B cell (primary cell): ENCODE measurements at regions of chr1 and their contacts with region 1.

Region 1: DNA sequence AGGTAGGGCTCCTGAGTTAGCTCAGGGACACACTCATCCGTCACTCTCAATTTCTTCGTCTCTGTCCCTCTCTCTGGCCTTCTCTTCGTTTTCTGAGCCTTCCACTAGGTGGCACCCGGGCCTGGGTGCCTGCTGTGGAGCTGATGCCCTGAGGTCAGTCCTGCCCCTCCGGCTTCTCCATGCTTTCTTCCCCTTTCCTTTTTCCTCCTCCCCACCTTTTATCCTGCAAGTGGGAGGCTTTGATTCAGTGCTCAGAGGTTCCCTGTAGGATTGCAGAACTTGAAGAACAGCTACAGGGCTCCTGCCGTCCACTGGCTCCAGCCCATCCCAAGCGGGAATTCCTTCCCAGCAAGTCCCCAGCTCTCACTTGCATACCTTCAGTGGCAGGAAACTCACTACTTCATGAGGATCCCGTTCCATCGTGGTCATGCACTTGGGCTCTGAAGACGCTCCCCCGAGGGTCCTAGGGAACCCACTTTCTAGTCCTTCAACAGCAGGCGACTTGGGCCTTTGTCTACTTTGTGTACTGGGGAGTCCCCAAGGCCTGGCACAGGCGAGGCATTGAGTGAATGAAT is 45.6 kb downstream of the SRRM1 start:
- DNase-seq: peak; percentile 79
- ATAC-seq: peak; percentile 87
- H3K4me3 ChIP-seq: no peak overlapping the region
- H3K4me3 Mint-ChIP-seq: no peak overlapping the region
- H3K27ac ChIP-seq: no peak overlapping the region
- H3K27ac Mint-ChIP-seq: peak overlapping the region; percentile 0
- H3K4me1 ChIP-seq: peaks cover 1 to 9% of the 10 kb centered on the region in 2 donors
- H3K4me1 Mint-ChIP-seq: peaks cover 8% of the 10 kb centered on the region
- H3K27me3 ChIP-seq: no peaks in the 10 kb centered on the region
- H3K27me3 Mint-ChIP-seq: no peaks in the 10 kb centered on the region
- CTCF ChIP-seq: peak; percentile 87

Region 2: GRCh38 chr1:24594154-24594553 is 94.6 kb before region 1 on chr1:
- CTCF ChIA-PET with region 1: no interaction called
- POLR2A ChIA-PET with region 1: no interaction called
- intact Hi-C with region 1: no loop called
- DNase-seq: no peak
- ATAC-seq: no peak
- H3K4me3 ChIP-seq: no peak overlapping the region
- H3K4me3 Mint-ChIP-seq: no peak overlapping the region
- H3K27ac ChIP-seq: no peak overlapping the region
- H3K27ac Mint-ChIP-seq: no peak overlapping the region
- H3K4me1 ChIP-seq: no peaks in the 10 kb centered on the region
- H3K4me1 Mint-ChIP-seq: no peaks in the 10 kb centered on the region
- H3K27me3 ChIP-seq: peaks cover 0 to 7% (median 0%) of the 10 kb centered on the region in 4 experiments
- H3K27me3 Mint-ChIP-seq: peaks cover 17% of the 10 kb centered on the region
- CTCF ChIP-seq: no peak

Region 3: DNA sequence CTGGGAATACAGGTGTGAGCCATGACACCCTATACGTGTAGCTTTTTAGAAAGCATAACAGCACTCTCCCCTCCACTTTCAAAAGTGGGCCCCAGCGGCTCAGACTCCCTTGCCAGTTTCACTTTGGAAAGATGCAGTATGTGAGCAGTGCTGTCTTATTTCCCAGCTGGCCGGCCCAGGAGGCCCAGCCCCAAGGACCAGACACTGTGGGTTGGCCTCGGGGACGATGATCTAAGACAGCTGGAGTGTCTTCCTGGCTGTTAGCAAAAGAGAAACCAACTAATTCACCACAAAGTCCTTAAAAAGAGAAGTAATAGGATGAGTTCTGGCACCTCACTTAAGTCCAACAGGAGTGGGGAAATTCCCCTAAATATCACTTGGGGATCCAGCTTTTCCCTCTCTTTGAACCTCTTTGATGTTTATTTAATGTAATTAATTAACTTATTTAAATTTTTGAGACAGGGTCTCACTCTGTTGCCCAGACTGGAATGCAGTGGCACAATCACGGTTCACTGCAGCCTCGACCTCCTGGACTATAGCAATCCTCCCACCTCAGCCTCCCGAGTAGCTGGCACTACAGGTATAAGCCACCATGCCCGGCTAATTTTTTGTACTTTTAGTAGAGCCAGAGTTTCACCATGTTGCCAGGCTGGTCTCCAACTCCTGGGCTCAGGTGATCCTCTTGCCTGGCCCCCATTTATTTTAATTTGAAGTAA is 39.0 kb after region 1 on chr1:
- CTCF ChIA-PET with region 1: interaction called, 22 read pairs
- POLR2A ChIA-PET with region 1: no interaction called
- intact Hi-C with region 1: no loop called
- DNase-seq: peak; percentile 65
- ATAC-seq: peak; percentile 82
- H3K4me3 ChIP-seq: peak overlapping the region in 3 of 5 experiments; percentile 27 to 58 (median 38)
- H3K4me3 Mint-ChIP-seq: peak overlapping the region; percentile 74
- H3K27ac ChIP-seq: peak overlapping the region; percentile 25 to 59
- H3K27ac Mint-ChIP-seq: peak overlapping the region; percentile 71
- H3K4me1 ChIP-seq: peaks cover 19 to 31% of the 10 kb centered on the region in 2 donors
- H3K4me1 Mint-ChIP-seq: peaks cover 27% of the 10 kb centered on the region
- H3K27me3 ChIP-seq: no peaks in the 10 kb centered on the region
- H3K27me3 Mint-ChIP-seq: no peaks in the 10 kb centered on the region
- CTCF ChIP-seq: no peak

Region 4: DNA sequence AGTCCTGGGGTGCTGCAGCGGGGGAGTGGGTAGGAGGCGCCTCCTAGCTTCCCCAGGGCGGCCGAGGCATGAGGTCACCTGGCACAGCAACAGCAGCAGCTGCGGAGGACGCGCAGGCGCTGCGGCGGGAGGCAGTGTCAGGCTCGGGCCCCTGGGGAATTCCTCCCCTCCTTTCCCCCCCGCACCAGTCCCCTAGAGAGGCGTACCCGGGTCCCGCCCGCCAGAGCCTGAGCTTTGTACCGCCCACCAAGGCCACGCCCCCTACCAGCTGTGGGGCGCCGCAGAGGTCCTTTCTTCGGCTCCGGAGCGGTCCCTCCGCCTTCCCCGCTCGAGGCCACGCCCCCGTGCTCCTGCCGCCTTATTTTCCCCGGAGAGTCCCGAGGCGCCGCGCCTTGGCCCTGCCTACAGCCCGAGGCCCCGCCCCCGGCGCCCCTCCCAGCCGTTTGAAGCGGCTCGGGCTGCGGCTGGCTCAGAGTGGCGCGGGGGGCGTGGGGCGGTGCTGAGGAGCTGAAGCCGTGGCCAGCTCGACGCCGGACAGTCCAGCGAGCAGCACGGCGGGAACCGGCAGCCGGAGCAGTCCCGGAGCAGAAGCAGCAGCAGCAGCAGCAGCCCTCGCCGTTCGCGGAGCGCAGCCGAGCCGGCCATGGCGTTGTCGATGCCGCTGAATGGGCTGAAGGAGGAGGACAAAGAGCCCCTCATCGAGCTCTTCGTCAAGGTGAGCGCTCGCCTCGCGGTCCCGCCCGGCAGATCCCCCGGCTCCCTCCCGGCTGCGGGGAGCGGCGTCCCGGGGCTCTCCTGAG is 56.4 kb after region 1 on chr1 and contains the start of gene CLIC4:
- CTCF ChIA-PET with region 1: interaction called, 49 read pairs
- POLR2A ChIA-PET with region 1: interaction called, 4 read pairs
- intact Hi-C with region 1: loop called (anchors 2 kb)
- DNase-seq: peak; percentile 100
- ATAC-seq: peak; percentile 78
- H3K4me3 ChIP-seq: peak within 1 kb of the TSS; percentile 79 to 99 (median 91)
- H3K4me3 Mint-ChIP-seq: peak within 1 kb of the TSS; percentile 94
- H3K27ac ChIP-seq: peak within 1 kb of the TSS; percentile 72 to 88
- H3K27ac Mint-ChIP-seq: peak within 1 kb of the TSS; percentile 99
- H3K4me1 ChIP-seq: peaks cover 63 to 82% of the 10 kb centered on the region in 2 donors
- H3K4me1 Mint-ChIP-seq: peaks cover 67% of the 10 kb centered on the region
- H3K27me3 ChIP-seq: no peaks in the 10 kb centered on the region
- H3K27me3 Mint-ChIP-seq: no peaks in the 10 kb centered on the region
- CTCF ChIP-seq: no peak
- total RNA-seq, gene CLIC4: 123 and 127 TPM in 2 replicates

Region 5: DNA sequence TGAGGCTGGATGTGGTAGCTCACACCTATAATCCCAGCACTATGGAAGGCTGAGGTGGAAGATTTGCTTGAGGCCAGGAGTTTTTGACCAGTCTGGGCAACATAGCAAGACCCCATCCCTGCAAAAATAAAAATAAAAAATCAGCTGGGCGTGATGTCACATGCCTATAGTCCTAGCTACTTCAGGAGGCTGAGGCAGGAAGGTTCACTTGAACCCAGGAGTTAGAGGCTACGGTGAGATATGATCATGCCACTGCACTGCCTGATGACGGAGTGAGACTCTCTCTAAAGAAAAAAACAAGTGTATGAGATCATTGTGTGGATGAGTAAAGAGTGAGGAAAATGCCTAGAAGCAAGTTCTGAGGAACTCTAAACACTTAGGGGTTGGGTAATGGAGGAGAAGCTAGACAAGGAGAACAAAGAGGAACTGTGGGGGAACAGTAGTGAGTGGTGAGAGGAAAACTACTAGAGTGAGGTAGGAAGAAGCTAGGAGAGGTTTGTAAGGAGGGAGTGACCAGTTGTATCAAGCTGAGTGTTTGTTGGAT is 73.5 kb after region 1 on chr1:
- CTCF ChIA-PET with region 1: interaction called, 15 read pairs
- POLR2A ChIA-PET with region 1: no interaction called
- intact Hi-C with region 1: no loop called
- DNase-seq: peak; percentile 23
- ATAC-seq: no peak
- H3K4me3 ChIP-seq: no peak overlapping the region
- H3K4me3 Mint-ChIP-seq: no peak overlapping the region
- H3K27ac ChIP-seq: peak overlapping the region in 1 of 2 donors; percentile 22
- H3K27ac Mint-ChIP-seq: no peak overlapping the region
- H3K4me1 ChIP-seq: peaks cover 36 to 44% of the 10 kb centered on the region in 2 donors
- H3K4me1 Mint-ChIP-seq: peaks cover 39% of the 10 kb centered on the region
- H3K27me3 ChIP-seq: no peaks in the 10 kb centered on the region
- H3K27me3 Mint-ChIP-seq: no peaks in the 10 kb centered on the region
- CTCF ChIP-seq: no peak

Region 6: GRCh38 chr1:24805534-24806301 is 117.0 kb after region 1 on chr1:
- CTCF ChIA-PET with region 1: interaction called, 28 read pairs
- POLR2A ChIA-PET with region 1: interaction called, 6 read pairs
- intact Hi-C with region 1: no loop called
- DNase-seq: no peak
- ATAC-seq: no peak
- H3K4me3 ChIP-seq: no peak overlapping the region
- H3K4me3 Mint-ChIP-seq: no peak overlapping the region
- H3K27ac ChIP-seq: peak overlapping the region in 1 of 2 donors; percentile 24
- H3K27ac Mint-ChIP-seq: no peak overlapping the region
- H3K4me1 ChIP-seq: peaks cover 15 to 27% of the 10 kb centered on the region in 2 donors
- H3K4me1 Mint-ChIP-seq: peaks cover 43% of the 10 kb centered on the region
- H3K27me3 ChIP-seq: no peaks in the 10 kb centered on the region
- H3K27me3 Mint-ChIP-seq: no peaks in the 10 kb centered on the region
- CTCF ChIP-seq: no peak

Region 7: DNA sequence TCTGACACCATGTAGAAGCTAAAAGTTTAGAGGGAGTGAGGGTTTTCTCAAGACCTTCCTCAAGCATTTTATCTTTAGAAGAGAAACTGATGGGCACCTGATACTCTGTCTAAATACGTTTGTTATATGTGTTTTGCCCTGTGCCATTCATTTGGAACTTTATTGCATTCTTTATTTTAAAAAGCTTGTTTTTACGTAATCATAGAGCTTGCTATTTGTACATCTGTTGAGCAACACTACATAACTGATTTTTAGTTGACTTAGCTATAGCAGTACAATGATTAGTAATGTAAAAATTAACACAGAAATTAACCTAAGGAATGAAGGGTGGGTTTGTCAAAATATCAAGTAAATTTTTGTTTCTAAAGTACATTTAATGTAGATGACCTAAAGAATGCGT is 152.9 kb after region 1 on chr1:
- CTCF ChIA-PET with region 1: interaction called, 182 read pairs
- POLR2A ChIA-PET with region 1: no interaction called
- intact Hi-C with region 1: no loop called
- DNase-seq: no peak
- ATAC-seq: no peak
- H3K4me3 ChIP-seq: no peak overlapping the region
- H3K4me3 Mint-ChIP-seq: no peak overlapping the region
- H3K27ac ChIP-seq: no peak overlapping the region
- H3K27ac Mint-ChIP-seq: no peak overlapping the region
- H3K4me1 ChIP-seq: no peaks in the 10 kb centered on the region
- H3K4me1 Mint-ChIP-seq: peaks cover 6% of the 10 kb centered on the region
- H3K27me3 ChIP-seq: no peaks in the 10 kb centered on the region
- H3K27me3 Mint-ChIP-seq: no peaks in the 10 kb centered on the region
- CTCF ChIP-seq: no peak